ENCODE measurements at regions of chr3 and their contacts with region 1.

Region 1: DNA sequence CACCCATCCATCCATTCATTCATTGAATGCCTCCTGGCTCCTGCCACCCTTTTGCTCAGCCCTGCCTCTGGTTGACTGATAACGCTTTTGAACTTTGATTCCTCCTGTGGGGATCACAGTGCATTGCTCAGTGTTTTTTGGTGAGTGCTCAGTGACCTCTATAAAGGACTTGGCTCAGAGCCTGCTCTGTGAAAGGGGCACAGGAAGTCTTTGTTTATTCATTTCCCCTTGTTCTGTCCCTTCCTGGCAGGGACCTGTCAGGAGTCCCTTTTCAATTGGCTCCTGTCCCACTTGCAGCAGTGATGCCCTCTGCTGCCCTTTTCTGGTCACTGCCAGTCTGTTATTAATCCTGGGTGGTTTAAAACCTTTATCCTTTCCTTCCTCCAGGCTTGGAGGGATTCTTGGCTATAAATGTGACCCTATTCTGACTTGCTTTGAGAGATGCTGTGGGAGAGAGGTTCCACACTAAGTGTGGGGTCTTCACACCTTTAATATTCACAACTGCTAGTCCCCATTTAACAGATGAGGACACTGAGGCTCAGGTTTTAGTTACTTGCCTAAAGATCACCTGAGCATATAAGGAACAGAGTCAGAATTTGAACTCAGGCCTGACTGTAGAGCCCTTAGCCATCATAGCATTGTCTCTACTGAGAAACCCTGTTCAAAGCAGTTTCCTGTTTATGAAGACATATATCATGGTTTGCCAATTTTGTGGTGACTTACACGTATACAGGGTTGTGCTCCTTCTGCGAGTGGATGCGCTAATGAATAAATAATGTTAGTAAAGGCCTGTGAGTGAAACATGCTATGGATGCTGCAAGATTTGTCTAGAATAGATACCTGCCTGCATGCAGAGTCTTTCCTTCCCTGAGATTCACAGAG is 23.2 kb upstream of the TATDN2 start:
- DNase-seq: peak; percentile 25 to 65 (median 57)
- ATAC-seq: peak; percentile 73
- H3K4me3 ChIP-seq: no peak overlapping the region
- H3K4me3 Mint-ChIP-seq: peak overlapping the region; percentile 0 to 85 (median 37)
- H3K27ac ChIP-seq: no peak overlapping the region
- H3K27ac Mint-ChIP-seq: peak overlapping the region; percentile 60 to 93 (median 86)
- H3K4me1 ChIP-seq: peaks cover 30 to 31% of the 10 kb centered on the region in 2 donors
- H3K4me1 Mint-ChIP-seq: peaks cover 37 to 76% (median 50%) of the 10 kb centered on the region in 7 donors
- H3K27me3 ChIP-seq: no peaks in the 10 kb centered on the region
- H3K27me3 Mint-ChIP-seq: no peaks in the 10 kb centered on the region

Region 2: DNA sequence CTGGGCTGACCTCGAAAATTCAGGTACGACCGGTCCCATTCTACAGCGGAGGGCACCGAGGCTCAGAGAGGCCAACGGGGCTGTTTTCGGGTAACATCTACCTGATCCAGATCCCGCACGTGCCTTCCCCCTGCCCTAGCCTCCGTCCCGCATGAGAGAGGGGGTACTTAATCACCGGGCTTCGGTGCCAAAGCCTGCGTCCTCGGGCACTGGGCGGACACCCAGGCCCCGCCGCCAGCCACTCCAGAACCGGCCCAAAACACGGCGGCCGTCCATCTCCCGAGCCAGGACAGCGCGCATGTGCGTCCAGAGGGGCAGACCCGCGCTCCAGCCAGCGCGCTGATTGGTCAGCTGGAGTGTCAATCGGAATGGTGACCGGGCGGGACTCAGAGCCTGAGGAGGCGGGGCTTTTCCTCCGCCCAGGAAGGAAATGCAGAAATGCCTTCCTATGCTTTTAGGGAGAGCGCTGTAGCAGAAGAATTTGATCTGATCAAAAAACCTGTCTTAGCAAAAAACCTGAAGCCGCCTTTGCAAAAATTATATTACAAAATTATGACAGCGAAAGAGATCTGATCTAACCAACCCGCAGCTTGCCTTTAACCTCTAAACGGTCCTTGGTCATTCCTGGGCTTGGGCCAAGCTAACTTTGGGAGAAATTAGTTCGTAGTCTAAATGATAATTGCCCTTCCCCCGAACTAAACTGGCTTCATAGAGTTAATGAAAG is 381.1 kb before region 1 on chr3 and contains the start of gene RPUSD3:
- CTCF ChIA-PET with region 1: no interaction called
- POLR2A ChIA-PET with region 1: no interaction called
- intact Hi-C with region 1: loop called in 1 of 2 experiments (anchors 1 kb)
- DNase-seq: peak; percentile 90 to 99 (median 94)
- ATAC-seq: peak; percentile 100
- H3K4me3 ChIP-seq: peak within 1 kb of the TSS; percentile 83
- H3K4me3 Mint-ChIP-seq: peak within 1 kb of the TSS; percentile 93 to 100 (median 97)
- H3K27ac ChIP-seq: peak within 1 kb of the TSS; percentile 82
- H3K27ac Mint-ChIP-seq: peak within 1 kb of the TSS; percentile 68 to 94 (median 91)
- H3K4me1 ChIP-seq: peaks cover 4 to 5% of the 10 kb centered on the region in 2 donors
- H3K4me1 Mint-ChIP-seq: peaks cover 12 to 40% (median 23%) of the 10 kb centered on the region in 7 donors
- H3K27me3 ChIP-seq: no peaks in the 10 kb centered on the region
- H3K27me3 Mint-ChIP-seq: no peaks in the 10 kb centered on the region
- total RNA-seq, gene RPUSD3: 17.7 to 61.2 (median 58.0) TPM

Region 3: GRCh38 chr3:10026084-10026890 is 198.7 kb before region 1 on chr3 and contains the start of gene FANCD2:
- CTCF ChIA-PET with region 1: no interaction called
- POLR2A ChIA-PET with region 1: no interaction called
- intact Hi-C with region 1: loop called in 1 of 2 experiments (anchors 1 kb)
- DNase-seq: peak; percentile 88 to 99 (median 94)
- ATAC-seq: peak; percentile 95
- H3K4me3 ChIP-seq: peak within 1 kb of the TSS; percentile 96
- H3K4me3 Mint-ChIP-seq: peak within 1 kb of the TSS; percentile 93 to 99 (median 96)
- H3K27ac ChIP-seq: peak within 1 kb of the TSS; percentile 89
- H3K27ac Mint-ChIP-seq: peak within 1 kb of the TSS; percentile 86 to 98 (median 97)
- H3K4me1 ChIP-seq: peaks cover 11 to 13% of the 10 kb centered on the region in 2 donors
- H3K4me1 Mint-ChIP-seq: peaks cover 0 to 45% (median 29%) of the 10 kb centered on the region in 7 donors
- H3K27me3 ChIP-seq: no peaks in the 10 kb centered on the region
- H3K27me3 Mint-ChIP-seq: no peaks in the 10 kb centered on the region
- total RNA-seq, gene FANCD2: 18.3 to 41.5 (median 34.1) TPM

Region 4: DNA sequence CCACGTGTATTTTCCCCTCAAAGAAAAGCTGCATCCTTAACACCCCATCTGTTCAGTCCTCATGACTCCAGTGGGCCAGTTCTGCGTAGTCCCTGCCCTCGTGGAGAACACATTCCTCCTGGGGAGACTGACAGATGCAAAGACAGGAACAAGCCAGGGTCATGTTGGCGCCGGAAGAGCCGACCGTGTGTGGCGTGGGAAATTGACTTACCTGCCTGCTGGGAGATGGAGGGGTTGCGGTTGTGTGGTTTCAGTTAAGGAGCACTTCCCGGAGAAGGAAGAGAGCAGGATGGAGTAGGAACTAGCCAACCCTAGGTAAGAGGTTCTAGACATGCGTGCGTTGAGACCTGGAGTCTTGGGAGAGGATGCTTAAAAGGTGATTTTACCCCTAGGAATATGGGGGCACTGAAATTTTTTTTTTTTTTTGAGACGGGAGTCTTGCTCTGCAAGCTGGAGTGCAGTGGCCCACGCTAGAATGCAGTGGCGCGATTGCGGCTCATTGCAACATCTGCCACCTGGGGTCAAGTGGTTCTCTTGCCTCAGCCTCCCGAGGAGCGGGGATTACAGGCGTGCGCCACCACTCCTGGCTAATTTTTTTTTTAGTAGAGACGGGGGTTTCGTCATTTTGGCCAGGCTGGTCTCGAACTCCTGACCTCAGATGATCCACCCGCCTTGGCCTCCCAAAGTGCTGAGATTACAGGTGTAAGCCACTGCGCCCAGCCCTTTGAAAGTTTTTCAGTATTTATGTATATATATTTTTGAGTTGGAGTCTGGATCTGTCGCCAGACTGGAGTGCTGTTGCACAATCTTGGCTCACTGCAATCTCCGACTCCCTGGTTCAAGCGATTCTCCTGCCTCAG is 82.1 kb before region 1 on chr3:
- CTCF ChIA-PET with region 1: interaction called, 3 read pairs
- POLR2A ChIA-PET with region 1: no interaction called
- intact Hi-C with region 1: loop called (anchors 1 kb)
- DNase-seq: peak in 2 of 9 donors; percentile 11 to 12
- ATAC-seq: no peak
- H3K4me3 ChIP-seq: peak overlapping the region; percentile 87
- H3K4me3 Mint-ChIP-seq: peak overlapping the region; percentile 85 to 98 (median 96)
- H3K27ac ChIP-seq: peak overlapping the region; percentile 95
- H3K27ac Mint-ChIP-seq: peak overlapping the region; percentile 38 to 98 (median 94)
- H3K4me1 ChIP-seq: peaks cover 10 to 12% of the 10 kb centered on the region in 2 donors
- H3K4me1 Mint-ChIP-seq: peaks cover 14 to 48% (median 37%) of the 10 kb centered on the region in 7 donors
- H3K27me3 ChIP-seq: no peaks in the 10 kb centered on the region
- H3K27me3 Mint-ChIP-seq: no peaks in the 10 kb centered on the region

Region 5: DNA sequence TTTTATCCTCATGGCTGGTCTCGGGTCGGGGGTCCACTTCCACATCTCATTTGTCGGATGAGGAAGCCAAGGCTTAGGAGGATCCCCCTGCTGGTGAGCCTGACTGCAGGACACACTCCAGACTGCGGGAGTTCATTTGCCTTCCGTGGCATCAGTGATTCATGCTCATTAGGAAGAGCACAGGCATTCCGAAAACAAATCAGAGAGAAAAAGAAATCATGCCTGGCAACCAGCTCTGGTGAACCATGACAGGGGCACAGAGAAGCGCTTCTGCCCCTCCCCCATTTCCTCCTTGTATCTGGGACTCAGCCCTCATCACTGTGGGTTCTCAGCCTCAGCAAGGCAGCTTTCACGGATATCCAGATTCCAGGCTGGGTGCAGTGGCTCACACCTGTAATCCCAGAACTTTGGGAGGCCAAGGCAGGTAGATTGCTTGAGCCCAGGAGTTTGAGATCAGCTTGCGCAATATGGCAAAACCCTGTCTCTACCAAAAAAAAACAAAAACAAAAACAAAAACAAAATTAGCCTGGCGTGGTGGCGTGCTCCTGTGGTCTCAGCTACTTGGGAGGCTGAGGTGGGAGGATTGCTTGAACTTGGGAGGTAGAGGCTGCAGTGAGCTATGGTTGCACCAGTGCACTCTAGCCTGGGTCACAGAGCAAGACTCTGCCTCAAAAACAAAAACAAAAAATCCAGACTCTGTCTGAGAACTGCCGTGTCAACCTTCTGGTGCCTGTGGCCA is 31.9 kb before region 1 on chr3:
- CTCF ChIA-PET with region 1: interaction called, 7 read pairs
- POLR2A ChIA-PET with region 1: interaction called, 6 read pairs
- intact Hi-C with region 1: loop called (anchors 1 kb)
- DNase-seq: peak in 8 of 9 donors; percentile 35 to 68 (median 62)
- ATAC-seq: peak; percentile 24
- H3K4me3 ChIP-seq: peak overlapping the region; percentile 34
- H3K4me3 Mint-ChIP-seq: peak overlapping the region; percentile 70 to 90 (median 81)
- H3K27ac ChIP-seq: peak overlapping the region; percentile 75
- H3K27ac Mint-ChIP-seq: peak overlapping the region; percentile 90 to 98 (median 97)
- H3K4me1 ChIP-seq: peaks cover 78 to 86% of the 10 kb centered on the region in 2 donors
- H3K4me1 Mint-ChIP-seq: peaks cover 54 to 92% (median 85%) of the 10 kb centered on the region in 7 donors
- H3K27me3 ChIP-seq: no peaks in the 10 kb centered on the region
- H3K27me3 Mint-ChIP-seq: no peaks in the 10 kb centered on the region

Region 6: DNA sequence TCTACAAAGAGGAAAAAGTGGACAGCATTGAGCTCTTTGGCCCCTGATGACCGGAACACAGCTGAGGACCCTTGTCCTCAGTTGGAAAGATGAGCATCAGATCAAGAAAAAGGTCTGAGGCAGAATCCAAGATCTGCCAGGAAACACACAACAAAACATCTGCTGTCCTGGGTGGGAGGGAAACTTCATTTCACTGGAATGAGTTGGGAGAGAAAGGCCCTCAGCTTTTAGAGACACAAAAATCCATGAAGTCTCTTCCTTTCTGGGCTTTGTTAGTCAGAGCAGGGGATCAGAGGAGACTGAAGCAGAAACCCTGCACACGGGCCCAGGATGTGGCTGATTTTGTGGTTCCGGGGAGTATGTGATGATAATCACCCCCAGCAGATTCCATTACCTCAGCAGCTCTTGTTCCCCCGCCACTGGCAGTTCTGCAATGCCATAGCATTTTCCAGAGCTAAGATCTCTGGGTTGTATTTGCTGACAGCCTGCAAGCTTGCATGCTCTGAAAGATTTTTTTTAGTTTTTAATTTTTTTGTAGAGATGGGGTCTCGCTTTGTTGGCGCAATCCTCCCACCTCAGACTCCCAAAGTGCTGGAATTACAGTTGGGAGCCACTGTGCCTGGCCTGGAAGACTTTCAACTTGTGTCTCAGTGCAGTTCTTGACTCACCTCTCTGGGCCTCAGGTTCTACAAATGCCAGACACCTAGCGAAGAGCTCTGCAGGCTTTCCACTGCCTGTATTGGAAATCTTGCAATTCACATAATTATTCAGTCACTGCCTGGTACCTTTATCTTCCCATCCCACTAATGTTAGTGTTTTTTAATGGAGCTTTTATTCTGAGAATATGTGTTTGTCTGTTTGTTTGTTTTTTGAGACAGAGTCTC is 17.4 kb after region 1 on chr3:
- CTCF ChIA-PET with region 1: interaction called, 3 read pairs
- POLR2A ChIA-PET with region 1: interaction called, 5 read pairs
- intact Hi-C with region 1: loop called (anchors 1 kb)
- DNase-seq: peak; percentile 20 to 93 (median 84)
- ATAC-seq: peak; percentile 98
- H3K4me3 ChIP-seq: peak overlapping the region; percentile 13
- H3K4me3 Mint-ChIP-seq: peak overlapping the region; percentile 75 to 82 (median 77)
- H3K27ac ChIP-seq: peak overlapping the region; percentile 71
- H3K27ac Mint-ChIP-seq: peak overlapping the region; percentile 86 to 96 (median 93)
- H3K4me1 ChIP-seq: peaks cover 33 to 43% of the 10 kb centered on the region in 2 donors
- H3K4me1 Mint-ChIP-seq: peaks cover 40 to 60% (median 54%) of the 10 kb centered on the region in 7 donors
- H3K27me3 ChIP-seq: no peaks in the 10 kb centered on the region
- H3K27me3 Mint-ChIP-seq: no peaks in the 10 kb centered on the region

Region 7: DNA sequence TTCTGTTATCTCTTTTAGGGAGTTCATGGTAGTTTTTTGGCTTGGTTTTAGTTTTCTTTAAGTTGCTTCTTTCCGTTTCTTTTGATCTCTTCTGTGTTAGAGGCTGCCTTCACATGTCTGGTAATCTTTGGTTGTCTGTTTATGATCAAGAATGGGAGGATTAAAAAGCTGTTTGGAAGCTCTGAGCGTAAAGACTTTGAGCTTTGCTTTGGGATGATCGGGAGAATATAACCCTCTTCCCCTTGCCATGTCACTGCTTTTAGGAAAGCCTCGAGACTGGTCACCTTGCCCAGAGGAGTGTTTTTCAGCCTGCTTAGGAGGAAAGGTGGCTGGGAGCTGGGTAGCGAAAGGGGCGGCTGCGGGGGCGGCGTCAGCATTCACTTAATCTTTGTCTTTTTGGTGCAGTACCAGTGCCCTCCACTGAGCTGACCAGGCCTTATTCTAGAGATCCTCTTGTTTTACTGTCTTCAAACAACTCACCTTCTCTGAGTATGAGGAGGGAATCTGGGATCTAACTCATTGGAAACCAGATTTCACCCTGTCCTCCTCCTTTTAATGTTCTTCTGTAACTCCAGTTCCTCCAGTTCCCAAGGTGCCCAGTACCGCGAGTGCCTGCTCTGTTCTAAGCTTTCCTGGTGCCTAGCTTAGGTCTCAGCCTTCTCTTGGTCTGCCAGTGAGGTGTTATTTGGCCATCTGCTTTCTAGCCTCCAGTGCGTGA is 38.8 kb after region 1 on chr3:
- CTCF ChIA-PET with region 1: interaction called, 3 read pairs
- POLR2A ChIA-PET with region 1: no interaction called
- intact Hi-C with region 1: loop called in 1 of 2 experiments (anchors 1 kb)
- DNase-seq: peak; percentile 33 to 76 (median 71)
- ATAC-seq: peak; percentile 96
- H3K4me3 ChIP-seq: peak overlapping the region; percentile 47
- H3K4me3 Mint-ChIP-seq: peak overlapping the region; percentile 68 to 87 (median 77)
- H3K27ac ChIP-seq: peak overlapping the region; percentile 73
- H3K27ac Mint-ChIP-seq: peak overlapping the region; percentile 82 to 97 (median 91)
- H3K4me1 ChIP-seq: peaks cover 36 to 62% of the 10 kb centered on the region in 2 donors
- H3K4me1 Mint-ChIP-seq: peaks cover 50 to 97% (median 80%) of the 10 kb centered on the region in 7 donors
- H3K27me3 ChIP-seq: no peaks in the 10 kb centered on the region
- H3K27me3 Mint-ChIP-seq: no peaks in the 10 kb centered on the region